H1 (cell line): ENCODE measurements at regions of chr3 and their contacts with region 1.

Region 1: DNA sequence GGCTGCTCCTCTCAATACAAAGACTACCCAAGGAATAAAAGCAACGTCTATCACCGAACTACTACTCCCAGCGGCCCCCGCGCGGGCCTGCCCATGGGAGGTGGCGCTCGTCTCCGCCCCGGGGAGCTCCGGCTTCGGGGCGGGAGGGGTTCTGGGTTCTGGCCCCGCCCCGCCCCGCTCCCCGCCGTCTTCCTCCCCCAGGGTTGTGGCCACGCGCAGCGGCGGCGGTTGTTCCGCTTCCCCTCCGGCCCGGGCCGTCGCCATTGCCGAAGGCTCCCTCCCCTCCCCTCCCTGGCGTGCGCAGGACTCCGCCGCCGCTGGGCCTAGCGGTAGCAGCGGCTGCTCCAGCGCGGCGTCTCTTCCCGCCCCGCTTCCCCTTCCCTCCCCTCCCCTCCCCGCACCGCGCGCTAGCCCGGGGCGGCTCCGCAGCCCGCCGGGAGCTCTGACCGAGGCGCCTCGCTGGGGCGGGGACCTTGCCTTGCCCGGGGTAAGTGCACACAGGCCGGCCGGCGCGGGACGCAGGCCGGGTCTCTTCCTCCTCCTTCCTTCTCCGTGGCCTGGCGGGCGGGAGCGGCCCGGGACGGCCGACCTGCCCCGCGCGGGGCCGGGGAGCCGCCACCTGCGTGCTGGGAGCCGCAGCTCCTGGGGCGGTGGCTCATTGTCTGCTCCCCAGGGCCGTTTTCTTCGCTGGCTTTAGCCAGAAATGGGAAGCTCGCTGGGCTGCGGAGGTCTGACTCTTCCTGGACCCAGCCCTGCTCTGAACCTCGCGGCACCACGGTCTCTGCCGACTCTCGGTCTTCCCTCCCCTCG is at the start of gene PAK2:
- DNase-seq: peak; percentile 68 to 87
- H3K4me3 ChIP-seq: peak within 1 kb of the TSS; percentile 80 to 99 (median 92)
- H3K27ac ChIP-seq: peak within 1 kb of the TSS; percentile 90
- H3K4me1 ChIP-seq: peaks cover 0 to 4% (median 0%) of the 10 kb centered on the region in 4 experiments; a peak in 2 of 7 replicates
- H3K27me3 ChIP-seq: no peaks in the 10 kb centered on the region
- CTCF ChIP-seq: 0 out of 4 replicates have a peak, but pooled peaks of 1 of the 3 experiments have one; percentile 4
- EP300 ChIP-seq: no peak
- POLR2A ChIP-seq: peak in 1 of 2 experiments; percentile 83; a peak in 2 of 3 replicates
- RAD21 ChIP-seq: no peak
- total RNA-seq, gene PAK2: 60.5 and 62.8 TPM in 2 replicates

Region 2: DNA sequence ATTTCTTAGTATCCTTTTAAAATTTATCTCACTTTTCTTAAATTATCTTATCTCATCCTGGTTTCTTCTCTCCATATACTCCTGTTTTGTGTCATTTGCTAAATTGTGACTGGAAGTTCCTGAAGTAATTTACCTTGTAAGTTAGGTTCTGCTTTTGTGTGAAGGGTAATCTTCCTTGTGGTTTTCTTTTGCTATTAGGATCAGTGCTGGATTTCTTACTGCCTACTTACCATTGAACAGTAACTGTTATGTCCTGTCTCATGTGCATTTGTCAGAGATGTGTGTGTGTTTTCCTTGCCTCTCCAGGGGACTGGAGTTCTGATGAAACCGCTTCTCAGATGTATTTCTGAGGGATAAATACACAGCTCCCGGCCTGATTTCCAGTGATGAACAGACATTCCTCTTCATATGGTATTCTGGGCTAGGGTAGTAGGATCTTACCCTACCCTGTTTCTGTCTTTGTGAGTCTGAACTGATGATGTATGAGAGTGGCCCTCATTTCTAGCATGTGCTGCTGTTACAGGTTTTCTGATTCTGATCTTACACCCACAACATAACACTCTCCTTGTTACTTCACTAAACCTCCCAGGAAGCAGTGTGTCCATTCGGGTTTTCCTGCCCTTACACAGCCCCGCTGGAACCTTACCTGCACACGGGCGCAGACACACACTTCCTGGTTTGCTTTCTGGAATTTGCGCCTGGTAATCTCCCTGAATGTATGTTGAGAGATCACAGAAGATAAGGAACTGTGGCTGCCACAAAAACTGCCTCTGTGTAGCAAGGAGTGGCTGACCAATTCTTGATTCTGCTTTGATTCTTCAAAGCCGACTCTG is 14.4 kb after region 1 on chr3:
- CTCF ChIA-PET with region 1: no interaction called
- POLR2A ChIA-PET with region 1: interaction called, 23 read pairs
- DNase-seq: no peak
- H3K4me3 ChIP-seq: no peak overlapping the region
- H3K27ac ChIP-seq: no peak overlapping the region
- H3K4me1 ChIP-seq: peaks cover 0 to 13% (median 3%) of the 10 kb centered on the region in 4 experiments; a peak in 5 of 7 replicates
- H3K27me3 ChIP-seq: no peaks in the 10 kb centered on the region; a peak in 1 of 7 replicates
- CTCF ChIP-seq: no peak
- EP300 ChIP-seq: no peak
- POLR2A ChIP-seq: no peak
- RAD21 ChIP-seq: no peak

Region 3: DNA sequence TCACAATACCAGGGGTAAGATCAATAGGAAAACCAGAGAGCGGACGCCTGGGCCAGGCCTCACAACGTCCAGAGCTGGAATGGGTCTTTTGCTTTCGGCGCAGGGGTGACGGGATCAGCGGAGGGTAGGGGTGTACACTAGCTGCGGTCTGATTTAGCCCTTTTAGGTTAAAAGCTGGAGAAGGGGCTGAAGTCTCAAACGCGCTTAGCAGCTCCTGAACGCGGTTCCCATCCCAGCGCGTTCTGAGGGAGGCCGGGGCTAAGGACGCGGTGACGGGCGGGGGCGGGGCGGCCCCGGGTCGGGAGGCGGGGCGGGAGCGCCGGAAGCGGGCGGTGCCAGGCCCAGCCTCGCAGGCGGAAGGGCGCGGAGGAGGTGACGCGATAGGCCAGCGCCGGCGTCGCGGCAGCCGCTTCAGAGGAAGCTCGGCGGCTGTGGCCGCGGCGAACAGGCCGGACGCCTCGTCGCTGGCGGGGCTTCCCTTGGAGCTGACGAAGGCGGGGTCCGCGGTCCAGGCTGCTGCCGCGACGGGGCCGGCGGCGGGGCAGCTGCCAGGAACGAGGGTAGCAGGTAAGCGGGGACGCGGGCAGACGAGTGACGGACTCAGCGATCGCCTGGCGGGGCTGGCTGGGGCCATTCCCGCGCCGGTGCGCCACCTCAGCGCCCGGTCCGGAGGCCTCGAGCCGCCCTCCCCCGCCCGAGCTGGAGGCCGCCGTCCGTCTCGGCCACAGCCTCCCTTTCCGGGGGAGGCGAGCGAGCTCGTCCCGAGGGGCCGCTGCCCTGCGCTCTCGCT is 127.8 kb after region 1 on chr3 and contains the start of gene SENP5:
- CTCF ChIA-PET with region 1: no interaction called
- POLR2A ChIA-PET with region 1: interaction called, 11 read pairs
- DNase-seq: peak; percentile 43 to 89
- H3K4me3 ChIP-seq: peak within 1 kb of the TSS; percentile 57 to 90 (median 88)
- H3K27ac ChIP-seq: peak within 1 kb of the TSS; percentile 89
- H3K4me1 ChIP-seq: peaks cover 0 to 4% (median 0%) of the 10 kb centered on the region in 4 experiments; a peak in 4 of 7 replicates
- H3K27me3 ChIP-seq: no peaks in the 10 kb centered on the region
- CTCF ChIP-seq: no peak
- EP300 ChIP-seq: no peak
- POLR2A ChIP-seq: peak; percentile 88 to 96
- RAD21 ChIP-seq: no peak
- total RNA-seq, gene SENP5: 27.3 TPM in 2 replicates